Activated CD4-positive, alpha-beta memory T cell treated with anti-CD3 and anti-CD28 coated beads for 36 hours (primary cell): ENCODE measurements at regions of chr17 and their contacts with region 1.

Region 1: GRCh38 chr17:82494236-82495055 is 25.1 kb upstream of the FOXK2 start:
- DNase-seq: peak; percentile 94
- H3K4me3 Mint-ChIP-seq: peak overlapping the region; percentile 68
- H3K27ac Mint-ChIP-seq: peak overlapping the region; percentile 89
- H3K4me1 Mint-ChIP-seq: peaks cover 22% of the 10 kb centered on the region
- H3K27me3 Mint-ChIP-seq: no peaks in the 10 kb centered on the region

Region 2: DNA sequence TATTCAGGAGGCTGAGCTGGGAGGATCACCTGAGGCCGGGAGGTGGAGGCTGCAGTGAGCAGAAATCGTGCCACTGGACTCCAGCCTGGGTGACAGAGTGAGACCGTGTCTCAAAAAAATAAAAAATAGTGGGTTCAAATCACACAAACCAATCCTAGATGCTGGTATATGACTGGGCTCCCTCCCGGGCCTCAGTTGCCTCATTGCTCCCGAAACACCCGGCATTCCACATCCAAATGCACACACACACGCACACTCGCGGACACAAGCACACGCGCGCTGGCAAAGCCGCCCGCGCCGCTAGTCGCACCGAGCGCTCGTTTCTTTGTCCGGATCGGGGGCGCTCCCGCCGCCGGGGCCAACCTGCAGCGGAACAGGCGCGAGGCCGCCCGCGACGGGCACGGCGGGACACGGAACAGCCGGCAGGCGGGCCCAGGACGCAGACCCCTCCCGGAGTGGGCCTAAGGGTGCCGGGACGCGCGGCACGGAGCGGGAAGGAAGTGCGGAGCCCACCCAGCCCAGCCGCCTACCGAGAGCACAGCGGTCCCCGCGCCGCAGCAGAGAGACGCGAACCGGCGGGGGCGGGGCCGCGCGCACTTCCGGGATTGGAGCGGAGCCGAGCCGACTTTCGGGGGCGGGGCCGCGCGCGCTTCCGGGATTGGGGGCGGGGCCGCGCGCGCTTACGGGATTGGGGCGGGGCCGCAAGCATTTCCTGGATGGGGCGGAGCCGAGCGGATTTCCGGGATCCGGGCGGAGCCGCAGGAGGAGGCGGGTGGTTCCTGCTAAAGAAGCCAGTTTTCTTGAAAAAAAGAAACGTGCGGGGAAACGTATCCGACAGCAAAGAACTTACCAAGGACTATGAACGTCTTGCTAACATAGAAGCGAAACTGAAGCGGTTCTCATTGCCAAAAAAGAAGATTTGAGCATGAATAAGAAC is 44.0 kb before region 1 on chr17 and contains the start of gene CYBC1:
- CTCF ChIA-PET with region 1: interaction called, 3 read pairs
- POLR2A ChIA-PET with region 1: interaction called, 3 read pairs
- intact Hi-C with region 1: loop called (anchors 1 kb)
- DNase-seq: peak; percentile 97
- H3K4me3 Mint-ChIP-seq: peak within 1 kb of the TSS; percentile 85
- H3K27ac Mint-ChIP-seq: peak within 1 kb of the TSS; percentile 99
- H3K4me1 Mint-ChIP-seq: peaks cover 46% of the 10 kb centered on the region
- H3K27me3 Mint-ChIP-seq: no peaks in the 10 kb centered on the region
- total RNA-seq, gene CYBC1: 333 to 343 TPM

Region 3: DNA sequence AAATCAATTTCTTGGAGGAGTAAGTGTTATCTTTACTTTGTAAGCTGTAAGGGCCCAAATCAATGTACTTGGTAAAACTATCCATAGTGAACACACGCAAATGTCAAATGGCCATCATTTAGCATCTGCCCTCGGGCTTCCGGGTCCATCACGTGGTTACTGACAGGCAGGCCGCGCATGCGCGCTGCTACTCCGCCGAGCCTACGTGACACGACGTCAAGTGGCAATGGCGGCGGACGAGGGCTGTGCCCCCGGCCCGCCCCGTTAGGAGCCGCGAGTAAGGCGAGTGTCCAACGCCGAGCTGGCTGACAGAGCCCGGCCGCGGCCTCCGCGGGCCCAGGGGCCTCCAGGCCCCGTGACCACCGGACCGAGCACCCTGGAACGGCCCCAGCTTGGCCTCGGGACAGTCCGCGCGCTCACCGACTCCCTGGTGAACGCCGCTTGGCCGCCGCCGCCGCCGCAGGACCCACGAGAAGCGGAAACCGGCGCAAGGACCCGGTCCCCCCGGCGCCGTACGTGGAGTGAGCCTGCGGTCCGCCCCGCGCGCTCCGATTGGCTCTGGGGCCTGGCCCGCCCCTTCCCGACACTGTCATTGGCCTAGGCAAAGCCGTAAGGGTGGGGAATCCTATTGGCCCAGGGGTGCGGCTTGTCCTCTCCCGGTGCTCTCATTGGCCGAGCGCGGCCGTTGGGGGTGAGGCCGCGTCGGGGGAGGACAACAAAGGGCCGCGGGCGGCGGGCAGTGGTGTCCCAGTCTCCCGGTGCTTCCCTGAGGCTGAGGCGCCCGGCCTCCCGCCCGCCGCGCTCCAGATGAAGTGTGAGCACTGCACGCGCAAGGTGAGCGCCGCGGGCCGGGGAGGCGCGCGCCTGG is 36.2 kb before region 1 on chr17 and contains the start of gene NARF:
- CTCF ChIA-PET with region 1: interaction called, 3 read pairs
- POLR2A ChIA-PET with region 1: interaction called, 6 read pairs
- intact Hi-C with region 1: loop called (anchors 2 kb)
- DNase-seq: peak; percentile 97
- H3K4me3 Mint-ChIP-seq: peak within 1 kb of the TSS; percentile 78
- H3K27ac Mint-ChIP-seq: peak within 1 kb of the TSS; percentile 97
- H3K4me1 Mint-ChIP-seq: peaks cover 40% of the 10 kb centered on the region
- H3K27me3 Mint-ChIP-seq: no peaks in the 10 kb centered on the region
- total RNA-seq, gene NARF: 101 to 110 TPM

Region 4: DNA sequence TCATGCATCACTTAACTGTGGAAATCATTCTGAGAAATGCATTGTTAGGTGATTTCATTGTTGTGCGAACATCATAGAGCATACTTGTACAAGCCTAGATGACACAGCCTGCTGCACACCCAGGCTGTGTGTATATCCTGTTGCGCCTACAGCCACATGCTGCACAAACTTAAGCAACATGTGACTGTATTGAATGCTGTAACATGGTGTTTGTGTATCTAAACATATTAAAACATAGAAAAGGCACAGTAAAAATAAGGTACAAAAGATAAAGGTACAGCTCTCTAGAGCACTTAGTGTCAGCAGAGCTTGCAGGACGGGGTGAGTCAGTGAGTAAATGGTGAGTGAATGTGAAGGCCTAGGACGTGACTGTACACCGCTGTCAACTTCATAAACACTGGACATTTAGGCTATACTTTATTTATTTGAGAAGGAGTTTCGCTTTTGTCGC is 37.0 kb after region 1 on chr17:
- CTCF ChIA-PET with region 1: no interaction called
- POLR2A ChIA-PET with region 1: no interaction called
- intact Hi-C with region 1: loop called (anchors 5 kb)
- DNase-seq: peak; percentile 37
- H3K4me3 Mint-ChIP-seq: no peak overlapping the region
- H3K27ac Mint-ChIP-seq: peak overlapping the region; percentile 68
- H3K4me1 Mint-ChIP-seq: peaks cover 64% of the 10 kb centered on the region
- H3K27me3 Mint-ChIP-seq: no peaks in the 10 kb centered on the region

Region 5: DNA sequence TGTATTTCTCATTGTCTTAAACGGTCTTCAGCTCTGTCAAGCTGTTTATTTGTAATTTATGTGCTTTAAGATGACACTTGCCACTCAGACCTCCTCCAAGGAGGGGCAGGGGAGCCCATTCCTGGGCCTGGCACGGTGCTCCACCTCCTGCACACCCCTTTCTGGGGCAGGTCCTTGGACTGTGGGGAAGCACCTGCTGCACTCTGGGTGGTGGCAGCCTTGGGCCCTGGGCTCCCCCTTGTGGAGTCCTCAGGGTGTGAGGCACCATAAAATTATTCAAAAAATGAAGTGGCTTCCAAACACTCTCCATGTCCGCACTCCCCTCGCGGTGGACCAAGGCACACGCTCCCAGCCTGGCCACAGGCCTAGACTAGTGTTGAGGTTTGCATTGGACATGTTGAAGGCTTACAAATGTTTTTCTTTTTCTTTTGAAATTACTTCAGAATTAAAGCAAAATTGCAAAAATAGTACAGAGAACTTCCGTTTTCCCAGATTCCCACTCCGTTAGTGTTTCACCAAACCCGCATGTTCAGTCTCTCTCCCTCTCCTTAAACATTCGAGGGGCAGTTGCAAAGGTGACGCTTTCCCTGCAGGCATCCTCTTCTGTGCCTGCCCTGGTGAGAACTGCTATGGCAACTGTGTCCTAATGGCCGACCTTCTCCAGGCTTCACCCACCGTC is 57.5 kb after region 1 on chr17:
- CTCF ChIA-PET with region 1: interaction called, 4 read pairs
- POLR2A ChIA-PET with region 1: no interaction called
- intact Hi-C with region 1: loop called (anchors 1 kb)
- DNase-seq: peak; percentile 88
- H3K4me3 Mint-ChIP-seq: no peak overlapping the region
- H3K27ac Mint-ChIP-seq: peak overlapping the region; percentile 67
- H3K4me1 Mint-ChIP-seq: peaks cover 34% of the 10 kb centered on the region
- H3K27me3 Mint-ChIP-seq: no peaks in the 10 kb centered on the region

Region 6: GRCh38 chr17:82781894-82782274 is 287.4 kb after region 1 on chr17:
- CTCF ChIA-PET with region 1: no interaction called
- POLR2A ChIA-PET with region 1: no interaction called
- intact Hi-C with region 1: no loop called
- DNase-seq: peak; percentile 88
- H3K4me3 Mint-ChIP-seq: no peak overlapping the region
- H3K27ac Mint-ChIP-seq: peak overlapping the region; percentile 38
- H3K4me1 Mint-ChIP-seq: peaks cover 10% of the 10 kb centered on the region
- H3K27me3 Mint-ChIP-seq: no peaks in the 10 kb centered on the region